ENCODE measurements at regions of chr10 and their contacts with region 1.

Region 1: GRCh38 chr10:132023092-132023811 is 41.5 kb upstream of the BNIP3 start:
- DNase-seq: peak; percentile 12
- H3K4me3 ChIP-seq: peak overlapping the region; percentile 36
- CTCF ChIP-seq: peak; percentile 95

Region 2: DNA sequence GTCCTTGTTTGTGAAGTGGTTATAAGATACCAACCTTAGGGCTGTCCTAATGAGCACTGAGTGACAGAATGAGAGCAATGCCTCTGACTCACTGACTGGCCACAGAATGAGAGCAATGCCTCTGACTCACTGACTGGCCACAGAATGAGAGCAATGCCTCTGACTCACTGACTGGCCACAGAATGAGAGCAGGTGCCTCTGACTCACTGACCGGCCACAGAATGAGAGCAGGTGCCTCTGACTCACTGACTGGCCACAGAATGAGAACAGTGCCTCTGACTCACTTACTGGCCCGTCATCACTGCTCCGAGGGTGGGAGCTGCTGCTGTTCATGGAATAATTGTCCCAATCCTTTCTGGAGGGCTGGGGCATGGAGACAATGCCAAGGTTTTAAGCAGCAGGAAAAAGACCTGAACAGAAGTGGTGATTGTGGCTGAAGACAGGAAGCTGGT is 387.7 kb before region 1 on chr10:
- CTCF ChIA-PET with region 1: no interaction called
- POLR2A ChIA-PET with region 1: no interaction called
- DNase-seq: no peak
- H3K4me3 ChIP-seq: no peak overlapping the region
- CTCF ChIP-seq: no peak

Region 3: DNA sequence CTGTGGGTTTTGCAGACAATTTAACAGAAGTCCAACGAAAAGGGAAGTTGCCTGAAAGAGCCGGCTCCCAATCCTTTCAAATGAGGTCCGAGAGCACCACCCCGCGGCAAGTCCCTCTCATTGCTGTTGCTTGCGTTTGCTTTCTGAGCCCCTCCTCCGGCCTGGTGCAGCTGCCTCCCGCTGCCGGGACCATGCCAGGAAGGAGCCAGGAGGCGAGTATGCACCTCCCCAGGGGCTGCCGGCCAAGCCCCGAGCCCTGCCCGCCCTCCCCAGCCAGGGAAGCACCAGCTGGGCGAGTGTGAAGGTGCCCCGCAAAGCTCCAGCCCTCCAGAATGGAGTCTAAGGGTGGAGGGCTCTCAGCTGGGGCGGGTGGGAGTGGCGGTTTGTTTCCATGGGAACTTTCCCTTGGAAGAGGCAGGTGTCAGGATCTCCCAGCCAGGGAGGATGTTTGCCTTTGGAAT is 148.2 kb before region 1 on chr10:
- CTCF ChIA-PET with region 1: interaction called, 10 read pairs
- POLR2A ChIA-PET with region 1: no interaction called
- DNase-seq: peak; percentile 31
- H3K4me3 ChIP-seq: no peak overlapping the region
- CTCF ChIP-seq: peak; percentile 80

Region 4: GRCh38 chr10:131900350-131901146 is 122.7 kb before region 1 on chr10 and contains the start of gene PPP2R2D:
- CTCF ChIA-PET with region 1: interaction called, 16 read pairs
- POLR2A ChIA-PET with region 1: no interaction called
- DNase-seq: peak; percentile 23
- H3K4me3 ChIP-seq: peak within 1 kb of the TSS; percentile 82
- CTCF ChIP-seq: no peak

Region 5: DNA sequence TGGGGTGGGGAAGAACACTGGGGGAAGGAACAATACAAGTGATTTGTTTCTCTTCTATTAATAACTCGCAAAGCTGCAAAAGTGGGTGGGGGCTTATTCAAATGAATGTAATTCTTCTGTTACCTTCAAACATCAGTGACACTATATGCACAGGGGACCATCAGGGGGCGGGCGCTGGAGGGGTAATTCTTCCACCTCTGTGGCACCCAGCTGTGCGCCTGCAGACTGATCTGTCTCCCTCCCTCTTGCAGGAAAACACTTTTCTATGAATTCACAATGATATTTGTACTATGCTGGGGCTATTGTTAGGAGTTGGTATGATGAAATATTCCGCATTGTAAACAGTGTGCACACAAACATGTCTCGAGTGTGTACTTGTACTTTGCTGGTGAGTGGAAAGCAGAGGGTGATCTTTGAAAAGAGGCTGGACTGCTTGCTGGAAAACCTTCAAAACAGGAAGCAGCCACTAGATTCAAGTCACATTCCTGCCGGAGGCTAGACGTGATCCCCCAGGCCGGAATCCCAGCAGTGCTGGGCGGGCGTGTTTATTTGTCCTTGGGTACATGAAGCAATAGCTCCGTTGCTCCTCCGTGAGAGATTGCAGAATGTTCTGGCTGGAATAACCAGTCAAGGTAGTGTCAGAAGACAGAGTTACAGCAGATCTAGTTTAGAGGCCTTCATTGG is 25.7 kb before region 1 on chr10:
- CTCF ChIA-PET with region 1: interaction called, 17 read pairs
- POLR2A ChIA-PET with region 1: no interaction called
- DNase-seq: peak; percentile 33
- H3K4me3 ChIP-seq: no peak overlapping the region
- CTCF ChIP-seq: no peak

Region 6: GRCh38 chr10:132036887-132037675 is 13.8 kb after region 1 on chr10:
- CTCF ChIA-PET with region 1: interaction called, 19 read pairs
- POLR2A ChIA-PET with region 1: no interaction called
- DNase-seq: no peak
- H3K4me3 ChIP-seq: no peak overlapping the region
- CTCF ChIP-seq: no peak